Activated T-helper 2 cell treated with anti-CD3 and anti-CD28 coated beads, Interferon-gamma antibody, Interleukin-2, Interleukin-4, amounts not matched to agents 10 μg/mL and 5 μg/mL and 100 μg/mL, durations not matched to agents 14 hours and 24 hours and 36 hours (primary cell): ENCODE measurements at regions of chr4 and their contacts with region 1.

Region 1: DNA sequence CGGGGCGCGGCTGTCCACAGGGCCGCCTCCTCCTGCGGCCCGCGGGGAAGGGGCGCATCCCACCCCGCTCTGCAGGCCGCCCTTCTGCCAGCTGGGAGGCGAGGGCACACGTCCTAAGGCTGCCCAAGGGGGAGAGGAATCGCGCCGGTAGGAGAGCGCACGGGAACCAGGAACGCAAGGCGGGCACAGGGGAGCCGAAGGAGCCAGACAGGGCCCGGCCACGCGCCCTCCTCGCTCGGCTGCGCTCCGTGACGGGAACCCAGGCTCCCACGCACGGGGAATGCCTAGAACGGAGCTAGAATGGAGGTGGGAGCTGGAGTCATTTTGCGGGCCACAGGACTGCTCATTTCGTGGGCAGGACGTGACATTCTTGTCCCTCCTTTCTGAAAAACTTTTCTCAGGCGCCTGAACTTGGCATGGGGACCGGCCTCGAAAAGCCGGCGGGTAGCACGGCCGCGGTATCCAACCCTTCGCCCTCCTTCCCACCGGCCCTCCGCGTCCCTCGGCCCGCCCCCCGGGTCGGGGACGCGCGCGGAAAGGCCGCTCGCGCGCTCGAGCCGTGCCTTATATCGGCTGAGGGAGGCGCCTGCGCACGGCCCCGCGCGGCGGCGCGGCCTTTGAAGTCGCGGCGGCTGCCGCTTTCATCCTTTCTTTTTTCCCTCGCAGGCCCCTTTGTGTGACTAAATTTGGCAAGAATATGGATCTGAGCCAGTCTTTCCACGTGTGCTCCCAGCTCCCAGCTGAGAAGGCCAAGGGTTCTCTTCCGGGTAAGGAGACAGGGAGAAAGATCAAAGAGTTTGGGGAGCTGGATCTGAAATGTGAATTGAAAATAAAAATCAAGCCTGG is 4.2 kb upstream of the LEF1 start:
- DNase-seq: peak; percentile 54
- H3K4me3 Mint-ChIP-seq: peak overlapping the region; percentile 87
- H3K27ac Mint-ChIP-seq: peak overlapping the region; percentile 79
- H3K4me1 Mint-ChIP-seq: peaks cover 45% of the 10 kb centered on the region
- H3K27me3 Mint-ChIP-seq: peaks cover 22% of the 10 kb centered on the region

Region 2: GRCh38 chr4:108135549-108136209 is 37.3 kb before region 1 on chr4:
- intact Hi-C with region 1: loop called (anchors 5 kb)
- DNase-seq: no peak
- H3K4me3 Mint-ChIP-seq: no peak overlapping the region
- H3K27ac Mint-ChIP-seq: peak overlapping the region; percentile 44
- H3K4me1 Mint-ChIP-seq: peaks cover 62% of the 10 kb centered on the region
- H3K27me3 Mint-ChIP-seq: no peaks in the 10 kb centered on the region

Region 3: DNA sequence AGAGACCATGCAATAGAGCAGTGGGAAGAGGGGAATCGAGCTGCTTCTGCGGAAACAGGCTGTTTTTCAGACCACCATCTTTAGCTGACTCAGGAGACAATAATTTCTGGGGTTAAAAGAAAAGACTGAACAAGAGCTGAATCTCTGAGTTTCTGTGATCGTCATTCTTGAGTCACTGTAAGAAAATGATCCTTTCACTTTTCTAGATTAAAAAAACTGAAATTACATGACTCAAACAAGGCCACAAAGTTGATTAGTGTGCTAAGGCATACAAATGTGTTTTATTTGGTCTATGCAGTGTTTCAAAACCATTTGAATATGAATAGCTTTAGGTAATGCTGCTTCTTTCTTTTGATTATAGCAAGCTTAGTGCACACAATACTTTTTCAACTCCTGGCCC is 253.0 kb after region 1 on chr4:
- intact Hi-C with region 1: loop called (anchors 1 kb)
- DNase-seq: no peak
- H3K4me3 Mint-ChIP-seq: no peak overlapping the region
- H3K27ac Mint-ChIP-seq: no peak overlapping the region
- H3K4me1 Mint-ChIP-seq: peaks cover 19% of the 10 kb centered on the region
- H3K27me3 Mint-ChIP-seq: peaks cover 13% of the 10 kb centered on the region

Region 4: DNA sequence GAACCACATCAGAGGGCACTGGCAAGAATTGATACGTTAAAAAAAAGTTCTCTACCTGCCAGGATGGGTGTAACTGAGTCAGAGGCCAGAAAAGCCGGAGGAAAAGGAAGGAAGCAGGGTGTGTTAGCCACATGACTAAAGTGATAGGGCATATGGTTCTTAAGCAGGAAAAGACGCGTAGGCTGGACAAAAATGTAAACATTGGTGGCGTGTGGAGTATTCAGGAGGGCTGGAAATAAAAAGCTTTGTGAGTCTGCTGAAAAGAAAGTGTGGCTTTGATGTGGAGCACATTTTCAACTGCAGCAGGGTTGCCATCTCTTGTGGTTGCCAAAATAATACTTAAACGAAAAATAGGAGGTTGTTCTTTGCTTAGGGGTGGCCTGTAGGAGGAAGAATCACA is 260.9 kb after region 1 on chr4:
- intact Hi-C with region 1: loop called (anchors 2 kb)
- DNase-seq: peak; percentile 47
- H3K4me3 Mint-ChIP-seq: no peak overlapping the region
- H3K27ac Mint-ChIP-seq: peak overlapping the region; percentile 77
- H3K4me1 Mint-ChIP-seq: peaks cover 32% of the 10 kb centered on the region
- H3K27me3 Mint-ChIP-seq: peaks cover 5% of the 10 kb centered on the region

Region 5: GRCh38 chr4:108483079-108483478 is 310.1 kb after region 1 on chr4:
- intact Hi-C with region 1: loop called (anchors 1 kb)
- DNase-seq: peak; percentile 35
- H3K4me3 Mint-ChIP-seq: peak overlapping the region; percentile 60
- H3K27ac Mint-ChIP-seq: peak overlapping the region; percentile 69
- H3K4me1 Mint-ChIP-seq: peaks cover 36% of the 10 kb centered on the region
- H3K27me3 Mint-ChIP-seq: peaks cover 4% of the 10 kb centered on the region

Region 6: DNA sequence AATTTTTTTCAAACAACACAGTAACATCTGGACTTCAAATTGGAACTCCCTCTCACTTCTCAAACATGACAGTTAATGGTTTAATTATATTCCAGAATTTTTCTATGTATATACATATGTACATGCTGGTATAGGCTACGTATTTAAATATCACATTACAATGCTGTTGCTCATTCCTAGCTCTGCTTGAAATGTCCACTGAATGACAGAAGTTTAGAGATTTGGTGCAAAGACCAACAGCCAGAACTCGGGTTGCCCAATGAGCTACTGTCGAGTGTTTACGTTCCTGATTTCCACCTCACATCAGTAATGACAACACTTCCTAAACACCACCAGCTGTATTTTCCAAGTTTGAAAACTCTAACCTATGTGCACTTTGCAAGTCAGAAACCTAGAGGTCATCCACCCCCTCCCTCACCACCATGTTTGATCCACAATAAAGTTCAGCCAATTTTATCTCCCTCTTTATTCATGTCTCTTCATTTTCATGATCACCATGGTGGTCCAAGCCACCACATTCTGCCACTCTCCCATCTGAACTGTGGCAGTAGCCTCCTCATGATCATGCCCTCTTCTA is 398.1 kb after region 1 on chr4:
- intact Hi-C with region 1: loop called (anchors 5 kb)
- DNase-seq: no peak
- H3K4me3 Mint-ChIP-seq: no peak overlapping the region
- H3K27ac Mint-ChIP-seq: no peak overlapping the region
- H3K4me1 Mint-ChIP-seq: peaks cover 5% of the 10 kb centered on the region
- H3K27me3 Mint-ChIP-seq: no peaks in the 10 kb centered on the region

Region 7: GRCh38 chr4:108620101-108620932 is 447.3 kb after region 1 on chr4 and contains the start of gene RPL34:
- intact Hi-C with region 1: loop called (anchors 5 kb)
- DNase-seq: peak; percentile 95
- H3K4me3 Mint-ChIP-seq: peak within 1 kb of the TSS; percentile 99
- H3K27ac Mint-ChIP-seq: peak within 1 kb of the TSS; percentile 95
- H3K4me1 Mint-ChIP-seq: peaks cover 38% of the 10 kb centered on the region
- H3K27me3 Mint-ChIP-seq: no peaks in the 10 kb centered on the region
- total RNA-seq, gene RPL34: 1,375 and 1,412 TPM in 2 replicates